Posterior cingulate gyrus (tissue), 11 donors: ENCODE measurements at regions of chr19 and their contacts with region 1.

Region 1: GRCh38 chr19:47514869-47515588 is at the start of gene NAPA:
- DNase-seq: peak; percentile 100

Region 2: DNA sequence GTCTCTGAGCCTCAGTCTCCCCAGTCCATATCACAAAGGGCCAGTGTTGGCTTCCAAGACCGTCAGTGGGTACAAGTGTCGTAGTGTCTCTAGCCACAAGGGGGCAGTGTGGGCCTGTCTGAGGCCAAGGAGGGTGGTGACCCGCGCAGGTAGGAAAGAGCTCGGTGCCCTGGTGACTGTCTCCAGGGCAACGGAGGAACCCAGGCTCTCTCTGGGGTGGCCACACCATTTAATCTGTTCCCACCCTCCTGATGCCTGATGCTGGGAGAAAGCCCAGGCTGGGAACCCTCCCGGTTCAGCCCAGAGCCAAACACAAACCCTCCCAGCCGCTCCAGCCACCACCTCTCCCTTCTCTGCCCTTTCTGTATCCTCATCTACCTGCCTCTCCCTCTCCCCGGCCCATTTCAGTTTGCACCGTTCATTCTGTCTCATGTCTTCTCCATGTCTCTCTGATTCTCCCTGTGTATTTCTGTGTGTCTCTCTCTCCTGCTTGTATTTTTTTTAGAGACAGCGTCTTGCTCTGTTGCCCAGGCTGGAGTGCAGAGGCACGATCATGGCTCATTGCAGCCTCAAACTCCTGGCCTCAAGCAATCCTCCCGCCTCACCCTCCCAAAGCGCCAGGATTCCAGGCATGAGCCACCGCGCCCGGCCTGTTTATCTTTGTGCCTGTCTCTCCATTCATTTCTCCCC is 78.2 kb before region 1 on chr19:
- intact Hi-C with region 1: loop called (anchors 2 kb)
- DNase-seq: peak; percentile 52 to 97 (median 82)

Region 3: DNA sequence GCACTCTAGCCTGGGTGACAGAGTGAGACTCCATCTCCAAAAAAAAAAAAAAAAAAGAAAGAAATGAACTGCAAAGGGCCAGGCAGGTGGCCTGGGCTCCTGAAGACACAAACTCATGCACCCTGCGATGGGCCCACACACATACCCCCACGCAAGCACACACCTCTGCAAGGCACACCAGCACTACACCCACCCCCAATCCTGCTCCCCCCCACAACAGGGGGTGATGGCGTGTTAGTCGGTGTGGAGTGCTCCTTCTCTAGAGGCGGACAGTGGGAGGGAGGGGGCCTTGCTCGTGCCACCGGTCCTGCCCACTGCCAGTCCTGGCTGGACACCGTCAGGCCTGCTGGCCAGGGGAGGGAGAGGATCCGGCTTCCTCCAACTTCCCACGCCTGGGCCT is 41.7 kb before region 1 on chr19:
- intact Hi-C with region 1: no loop called
- DNase-seq: peak in 1 of 10 donors; percentile 40

Region 4: GRCh38 chr19:47483800-47484690 is 31.0 kb before region 1 on chr19 and contains the start of gene KPTN:
- intact Hi-C with region 1: loop called (anchors 2 kb)
- DNase-seq: peak; percentile 80 to 98 (median 84)

Region 5: DNA sequence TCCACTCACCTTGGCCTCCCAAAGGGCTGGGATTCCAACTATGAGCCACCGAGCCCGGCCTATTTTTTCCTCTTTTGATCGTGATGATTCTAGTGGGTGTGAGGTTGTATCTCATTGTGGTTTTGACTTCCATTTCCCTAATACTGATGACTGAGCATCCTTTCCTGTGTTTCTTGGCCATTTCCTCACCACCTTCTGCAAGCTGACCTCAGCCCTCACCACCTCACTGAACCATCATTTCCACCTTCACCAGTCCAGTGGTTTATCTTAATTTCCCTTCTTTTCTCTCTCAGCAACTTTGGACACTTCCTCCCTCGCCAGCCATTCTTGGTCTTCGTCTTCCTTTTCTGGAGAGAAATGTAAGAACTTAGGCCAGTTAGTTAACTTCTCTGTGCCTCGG is 80.9 kb after region 1 on chr19:
- intact Hi-C with region 1: no loop called
- DNase-seq: peak in 1 of 10 donors; percentile 12

Region 6: GRCh38 chr19:47608074-47608918 is 93.3 kb after region 1 on chr19:
- intact Hi-C with region 1: loop called (anchors 5 kb)
- DNase-seq: peak; percentile 86 to 99 (median 93)

Region 7: DNA sequence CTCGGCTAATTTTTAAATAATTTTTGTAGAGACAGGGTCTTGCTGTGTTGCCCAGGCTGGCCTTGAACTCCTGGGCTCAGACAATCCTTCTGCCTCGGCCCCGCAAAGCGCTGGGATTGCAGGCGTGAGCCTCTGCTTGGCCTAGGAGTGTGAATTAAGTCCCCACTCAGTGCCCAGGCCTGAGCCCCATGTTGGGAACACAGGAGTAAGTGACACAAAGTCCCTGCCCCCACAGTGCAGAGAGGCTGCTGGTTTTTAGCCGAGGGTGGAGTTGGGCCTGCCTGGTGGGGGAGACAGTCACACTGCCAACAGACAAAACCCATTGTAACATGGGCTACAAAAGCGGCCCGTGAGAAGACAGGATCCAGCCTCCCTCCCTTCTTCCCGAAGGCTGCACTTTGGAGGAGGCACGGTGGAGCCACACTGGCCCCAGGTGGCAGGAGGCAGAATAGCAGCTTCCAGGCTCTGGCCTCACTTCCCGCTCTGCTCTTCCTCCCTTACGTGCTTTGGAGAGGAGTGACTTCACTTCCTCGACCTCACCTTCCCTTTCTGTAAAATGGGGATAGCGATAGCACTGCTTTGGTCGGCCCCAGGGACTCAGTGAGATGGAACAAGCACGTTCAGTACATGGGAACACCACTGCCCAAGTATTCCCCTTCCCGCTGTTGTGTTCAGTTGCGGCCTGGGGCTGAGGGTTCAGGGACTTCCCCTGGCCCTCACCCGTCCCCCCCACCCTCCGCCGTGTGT is 183.0 kb after region 1 on chr19:
- intact Hi-C with region 1: loop called (anchors 1 kb)
- DNase-seq: peak; percentile 74 to 97 (median 83)

Region 8: DNA sequence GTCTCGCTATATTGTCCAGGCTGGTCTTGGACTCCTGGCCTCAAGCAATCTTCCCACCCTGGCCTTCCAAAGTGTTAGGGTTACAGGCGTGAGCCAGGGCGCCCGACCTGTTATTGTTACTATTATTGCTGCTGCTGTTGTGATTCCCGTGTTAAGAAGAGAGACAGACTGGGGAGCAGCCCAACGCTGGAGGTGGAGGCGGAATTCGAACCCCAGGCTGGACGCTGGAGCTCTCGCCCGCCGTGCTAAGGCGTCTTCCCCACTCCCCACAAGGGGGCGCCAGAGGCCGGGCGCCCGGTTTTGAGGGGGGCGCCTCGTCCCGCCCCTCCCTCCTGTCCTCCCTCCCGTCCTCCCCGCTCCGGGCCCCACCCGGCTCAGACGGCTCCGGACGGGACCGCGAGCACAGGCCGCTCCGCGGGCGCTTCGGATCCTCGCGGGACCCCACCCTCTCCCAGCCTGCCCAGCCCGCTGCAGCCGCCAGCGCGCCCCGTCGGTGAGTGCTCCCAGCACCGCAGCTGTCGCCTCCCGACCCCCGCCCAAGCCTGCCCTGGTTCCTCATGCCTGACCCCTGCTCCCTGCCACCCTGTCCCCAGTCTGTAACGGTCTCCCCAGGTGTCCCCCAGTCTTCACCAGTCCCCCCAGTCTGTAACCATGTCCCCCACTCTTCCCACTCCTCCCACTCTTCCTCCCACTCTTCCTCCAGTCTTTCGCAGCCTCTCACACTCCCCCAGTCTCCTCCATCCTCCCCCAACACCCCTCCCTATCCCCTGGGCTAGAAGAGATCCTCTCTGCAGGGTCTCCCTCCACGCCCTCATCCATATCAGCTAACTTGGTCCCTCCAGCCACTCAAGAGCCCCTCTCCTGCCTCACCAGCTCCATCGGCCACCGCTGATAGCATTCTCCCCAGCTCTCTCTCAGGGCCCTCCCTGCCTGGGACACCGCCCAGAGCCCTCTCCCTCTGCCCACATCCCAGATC is 198.3 kb after region 1 on chr19 and contains the start of gene EHD2:
- intact Hi-C with region 1: no loop called
- DNase-seq: peak in 5 of 10 donors; percentile 41 to 92 (median 59)